ENCODE measurements at regions of chr2 and their contacts with region 1.

Region 1: DNA sequence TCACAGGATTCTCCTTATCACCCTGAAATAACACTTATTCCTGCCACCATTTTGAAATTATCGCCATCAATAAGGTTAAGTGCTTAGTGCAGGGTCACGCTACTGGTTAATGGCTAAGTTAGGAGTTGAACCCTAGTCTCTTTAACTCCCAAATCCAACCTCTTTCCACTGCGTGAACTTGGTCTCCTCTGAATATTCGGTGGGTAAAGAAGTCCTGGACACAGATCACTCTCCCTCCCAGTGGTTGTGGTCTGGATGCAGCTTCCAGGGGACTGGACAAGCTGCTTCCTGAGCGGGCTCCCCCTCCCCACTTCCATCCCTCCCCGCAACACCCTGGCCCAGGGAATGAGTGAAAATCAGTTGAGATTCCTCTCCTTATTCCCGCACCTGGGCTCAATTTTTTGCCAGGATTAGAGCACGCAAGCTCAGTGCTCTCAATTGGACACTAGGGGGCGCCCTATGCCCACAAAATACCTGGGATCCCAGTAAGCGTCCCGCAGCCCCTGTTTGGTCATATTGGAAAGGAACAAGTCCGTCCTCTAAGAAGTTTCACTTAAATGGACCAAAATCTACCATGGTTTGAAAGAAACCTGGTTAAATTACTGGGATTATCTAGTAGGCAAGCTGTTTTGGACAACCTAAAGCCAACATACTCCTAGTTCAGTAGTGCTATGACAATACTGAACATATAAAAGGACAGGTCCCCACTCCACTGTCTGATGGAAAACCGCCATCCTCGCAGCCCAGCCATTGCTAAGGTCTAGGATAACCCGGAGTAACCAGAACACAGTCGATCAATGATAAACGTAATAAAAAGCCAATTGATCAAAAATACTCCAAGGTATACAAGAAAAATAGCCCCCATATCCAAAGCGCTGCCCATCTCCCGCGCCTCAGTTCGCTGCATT is 40.4 kb downstream of the DHRS9 start:
- DNase-seq: peak; percentile 56 to 83 (median 65)
- H3K4me3 ChIP-seq: no peak overlapping the region
- H3K4me3 Mint-ChIP-seq: peak overlapping the region in 2 of 7 donors; percentile 52 to 82
- H3K27ac ChIP-seq: no peak overlapping the region
- H3K27ac Mint-ChIP-seq: peak overlapping the region in 5 of 8 donors; percentile 53 to 70 (median 61)
- H3K4me1 ChIP-seq: peaks cover 52% of the 10 kb centered on the region
- H3K4me1 Mint-ChIP-seq: peaks cover 41 to 50% (median 47%) of the 10 kb centered on the region in 3 donors
- H3K27me3 ChIP-seq: peaks cover 4% of the 10 kb centered on the region
- H3K27me3 Mint-ChIP-seq: peaks cover 0 to 7% of the 10 kb centered on the region in 2 donors

Region 2: GRCh38 chr2:168796583-168797285 is 313.0 kb before region 1 on chr2:
- CTCF ChIA-PET with region 1: no interaction called
- POLR2A ChIA-PET with region 1: no interaction called
- DNase-seq: no peak
- H3K4me3 ChIP-seq: no peak overlapping the region
- H3K4me3 Mint-ChIP-seq: no peak overlapping the region
- H3K27ac ChIP-seq: peak overlapping the region; percentile 55
- H3K27ac Mint-ChIP-seq: no peak overlapping the region
- H3K4me1 ChIP-seq: no peaks in the 10 kb centered on the region
- H3K4me1 Mint-ChIP-seq: no peaks in the 10 kb centered on the region
- H3K27me3 ChIP-seq: no peaks in the 10 kb centered on the region
- H3K27me3 Mint-ChIP-seq: peaks cover 5 to 11% of the 10 kb centered on the region in 2 donors

Region 3: DNA sequence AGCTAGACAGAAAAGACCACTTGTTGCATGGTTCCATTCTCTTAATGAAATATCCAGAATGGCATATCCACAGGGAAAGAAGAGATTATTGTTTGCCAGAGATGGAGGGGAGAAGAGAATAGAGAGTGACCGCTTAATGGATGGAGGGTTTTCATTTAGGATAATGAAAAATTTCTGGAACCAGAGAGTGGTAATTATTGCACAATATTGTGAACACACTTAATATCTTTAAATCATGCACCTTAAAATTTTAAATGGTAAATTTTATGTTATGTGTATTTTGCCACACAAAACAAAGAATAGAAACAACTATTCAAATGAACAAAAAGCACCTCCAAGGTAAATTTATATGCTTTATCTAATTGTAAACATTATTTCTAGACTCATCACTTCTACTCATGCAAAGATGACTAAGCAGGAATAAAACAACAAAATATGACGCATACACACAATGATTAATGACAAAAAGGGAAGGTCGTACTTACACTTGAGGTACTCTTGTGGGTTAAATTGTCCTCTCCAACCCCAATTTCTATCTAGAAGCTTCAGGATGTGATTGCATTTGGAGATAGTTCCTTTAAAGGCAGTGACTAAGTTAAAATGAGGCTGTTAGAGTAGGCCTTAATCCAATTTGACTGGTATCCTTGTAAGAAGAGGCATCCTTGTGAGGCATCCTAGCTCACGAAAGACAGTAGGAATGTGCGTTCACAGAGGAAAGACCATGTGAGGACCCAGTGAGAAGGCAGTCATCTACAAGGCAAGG is 59.1 kb before region 1 on chr2:
- CTCF ChIA-PET with region 1: no interaction called
- POLR2A ChIA-PET with region 1: no interaction called
- DNase-seq: no peak
- H3K4me3 ChIP-seq: no peak overlapping the region
- H3K4me3 Mint-ChIP-seq: no peak overlapping the region
- H3K27ac ChIP-seq: no peak overlapping the region
- H3K27ac Mint-ChIP-seq: no peak overlapping the region
- H3K4me1 ChIP-seq: no peaks in the 10 kb centered on the region
- H3K4me1 Mint-ChIP-seq: no peaks in the 10 kb centered on the region
- H3K27me3 ChIP-seq: no peaks in the 10 kb centered on the region
- H3K27me3 Mint-ChIP-seq: peaks cover 10 to 17% of the 10 kb centered on the region in 2 donors

Region 4: GRCh38 chr2:169131587-169132512 is 22.1 kb after region 1 on chr2:
- CTCF ChIA-PET with region 1: interaction called, 76 read pairs
- POLR2A ChIA-PET with region 1: no interaction called
- DNase-seq: peak in 2 of 5 donors; percentile 30 to 39
- H3K4me3 ChIP-seq: no peak overlapping the region
- H3K4me3 Mint-ChIP-seq: no peak overlapping the region
- H3K27ac ChIP-seq: no peak overlapping the region
- H3K27ac Mint-ChIP-seq: no peak overlapping the region
- H3K4me1 ChIP-seq: no peaks in the 10 kb centered on the region
- H3K4me1 Mint-ChIP-seq: peaks cover 0 to 4% (median 4%) of the 10 kb centered on the region in 3 donors
- H3K27me3 ChIP-seq: no peaks in the 10 kb centered on the region
- H3K27me3 Mint-ChIP-seq: peaks cover 0 to 2% of the 10 kb centered on the region in 2 donors

Region 5: DNA sequence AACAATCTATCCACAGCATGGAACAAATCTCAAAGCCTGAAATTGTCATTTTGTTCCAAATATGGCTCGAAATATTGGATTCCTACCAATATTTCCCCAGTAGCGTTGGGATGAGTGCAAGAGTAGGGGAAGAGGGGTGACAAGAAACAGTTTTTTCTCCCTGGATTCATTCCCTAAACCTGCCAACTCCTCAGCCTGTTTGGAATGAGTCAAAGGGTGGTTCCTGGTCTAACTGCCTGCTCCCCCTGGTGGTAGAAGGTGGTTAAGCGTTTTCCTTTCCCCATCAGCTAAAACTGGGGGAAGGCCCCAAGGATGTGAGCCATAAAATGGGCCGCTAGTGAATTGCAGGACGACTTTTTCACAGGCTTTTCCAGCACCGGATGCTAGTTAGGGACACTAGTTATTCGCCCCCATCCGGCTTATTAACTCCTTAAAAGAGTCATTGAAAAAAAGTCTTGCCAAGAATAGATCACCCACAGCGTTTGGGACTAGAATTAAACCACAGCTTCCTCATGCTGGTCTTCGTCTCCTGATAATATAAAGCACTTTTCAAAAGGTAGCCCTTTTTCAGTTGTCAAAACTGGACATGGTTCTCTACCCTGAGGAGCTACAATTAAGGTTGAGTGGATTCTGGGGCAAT is 32.1 kb after region 1 on chr2:
- CTCF ChIA-PET with region 1: interaction called, 147 read pairs
- POLR2A ChIA-PET with region 1: no interaction called
- DNase-seq: peak; percentile 37 to 67 (median 53)
- H3K4me3 ChIP-seq: no peak overlapping the region
- H3K4me3 Mint-ChIP-seq: no peak overlapping the region
- H3K27ac ChIP-seq: no peak overlapping the region
- H3K27ac Mint-ChIP-seq: no peak overlapping the region
- H3K4me1 ChIP-seq: no peaks in the 10 kb centered on the region
- H3K4me1 Mint-ChIP-seq: no peaks in the 10 kb centered on the region
- H3K27me3 ChIP-seq: no peaks in the 10 kb centered on the region
- H3K27me3 Mint-ChIP-seq: peaks cover 0 to 3% of the 10 kb centered on the region in 2 donors

Region 6: GRCh38 chr2:169159686-169160085 is 49.9 kb after region 1 on chr2:
- CTCF ChIA-PET with region 1: interaction called, 13 read pairs
- POLR2A ChIA-PET with region 1: no interaction called
- DNase-seq: no peak
- H3K4me3 ChIP-seq: no peak overlapping the region
- H3K4me3 Mint-ChIP-seq: no peak overlapping the region
- H3K27ac ChIP-seq: no peak overlapping the region
- H3K27ac Mint-ChIP-seq: peak overlapping the region in 1 of 8 donors; percentile 28
- H3K4me1 ChIP-seq: no peaks in the 10 kb centered on the region
- H3K4me1 Mint-ChIP-seq: no peaks in the 10 kb centered on the region
- H3K27me3 ChIP-seq: no peaks in the 10 kb centered on the region
- H3K27me3 Mint-ChIP-seq: peaks cover 7 to 22% of the 10 kb centered on the region in 2 donors